Activated CD8-positive, alpha-beta T cell treated with anti-CD3 and anti-CD28 coated beads, Interleukin-2, amount 10 ng/mL, durations not matched to agents 7 days and 5 days (primary cell): ENCODE measurements at regions of chr6 and their contacts with region 1.

Region 1: GRCh38 chr6:47512872-47513271 is 35.3 kb downstream of the CD2AP start:
- DNase-seq: no peak
- ATAC-seq: no peak
- H3K4me3 Mint-ChIP-seq: no peak overlapping the region
- H3K27ac Mint-ChIP-seq: no peak overlapping the region
- H3K4me1 Mint-ChIP-seq: peaks cover 6% of the 10 kb centered on the region
- H3K27me3 Mint-ChIP-seq: no peaks in the 10 kb centered on the region

Region 2: DNA sequence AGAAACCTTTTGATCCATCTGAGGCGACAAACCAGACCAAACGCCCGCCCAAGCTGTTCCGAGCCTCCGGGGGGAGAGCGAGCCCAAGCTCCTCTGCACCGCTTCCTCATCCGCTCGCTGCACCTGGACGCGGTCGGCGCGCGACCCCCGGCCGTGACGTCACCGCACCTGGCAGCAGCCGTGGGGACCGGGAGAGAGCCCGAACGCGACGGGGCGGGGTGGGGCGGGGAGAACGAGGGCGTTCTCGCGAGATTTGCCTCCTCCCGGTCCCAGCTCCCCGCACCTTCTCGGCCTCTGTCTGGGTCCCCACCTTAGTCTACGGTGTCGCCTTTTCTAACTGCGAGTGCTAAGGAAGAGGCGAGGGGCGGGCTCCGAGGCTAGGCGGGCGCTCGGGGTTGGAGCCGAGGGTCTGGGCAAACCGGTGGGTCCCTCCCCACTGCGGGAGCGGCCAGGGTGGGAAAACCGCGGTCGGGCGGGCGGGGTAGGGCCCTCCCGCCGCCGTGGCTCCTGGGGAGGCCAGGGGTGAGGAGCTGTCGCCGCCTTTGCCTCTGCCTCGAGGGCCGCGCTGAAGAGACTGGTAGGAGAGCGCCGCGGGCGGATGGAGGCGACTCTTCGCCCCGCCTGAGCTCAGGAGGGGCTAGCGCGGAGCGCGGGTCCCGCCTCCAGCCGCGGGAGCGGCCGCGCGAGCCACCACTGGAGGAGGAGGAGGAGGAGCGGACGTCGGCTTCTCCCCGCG is 35.2 kb before region 1 on chr6 and contains the start of gene CD2AP:
- CTCF ChIA-PET with region 1: no interaction called
- POLR2A ChIA-PET with region 1: interaction called, 10 read pairs
- DNase-seq: peak; percentile 94
- ATAC-seq: peak; percentile 84
- H3K4me3 Mint-ChIP-seq: peak within 1 kb of the TSS; percentile 95
- H3K27ac Mint-ChIP-seq: peak within 1 kb of the TSS; percentile 95
- H3K4me1 Mint-ChIP-seq: peaks cover 35% of the 10 kb centered on the region
- H3K27me3 Mint-ChIP-seq: no peaks in the 10 kb centered on the region
- total RNA-seq, gene CD2AP: 38.8 to 39.2 TPM

Region 3: DNA sequence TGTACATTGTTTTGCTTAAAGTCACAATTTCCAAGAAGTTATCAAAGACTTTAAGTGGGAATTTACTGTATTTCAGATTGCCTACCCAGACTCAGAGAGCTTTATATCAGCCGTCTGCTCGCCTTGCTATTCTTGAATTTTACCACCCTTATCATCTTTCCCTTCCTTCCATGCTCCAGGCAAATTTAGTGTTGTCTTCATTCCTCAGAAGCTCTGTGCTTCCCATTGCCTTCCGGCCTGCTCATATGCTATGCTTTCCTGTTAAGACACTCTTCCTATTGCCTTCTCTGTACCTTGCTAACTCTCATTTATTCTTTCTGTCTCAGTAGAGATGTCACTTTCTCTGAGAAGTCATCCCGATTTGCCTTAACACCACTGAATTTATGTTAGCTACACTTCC is 16.9 kb after region 1 on chr6:
- CTCF ChIA-PET with region 1: no interaction called
- POLR2A ChIA-PET with region 1: no interaction called
- DNase-seq: no peak
- ATAC-seq: no peak
- H3K4me3 Mint-ChIP-seq: no peak overlapping the region
- H3K27ac Mint-ChIP-seq: no peak overlapping the region
- H3K4me1 Mint-ChIP-seq: peaks cover 7% of the 10 kb centered on the region
- H3K27me3 Mint-ChIP-seq: no peaks in the 10 kb centered on the region